Tibial artery (tissue), 4 donors: ENCODE measurements at regions of chr22 and their contacts with region 1.

Region 1: DNA sequence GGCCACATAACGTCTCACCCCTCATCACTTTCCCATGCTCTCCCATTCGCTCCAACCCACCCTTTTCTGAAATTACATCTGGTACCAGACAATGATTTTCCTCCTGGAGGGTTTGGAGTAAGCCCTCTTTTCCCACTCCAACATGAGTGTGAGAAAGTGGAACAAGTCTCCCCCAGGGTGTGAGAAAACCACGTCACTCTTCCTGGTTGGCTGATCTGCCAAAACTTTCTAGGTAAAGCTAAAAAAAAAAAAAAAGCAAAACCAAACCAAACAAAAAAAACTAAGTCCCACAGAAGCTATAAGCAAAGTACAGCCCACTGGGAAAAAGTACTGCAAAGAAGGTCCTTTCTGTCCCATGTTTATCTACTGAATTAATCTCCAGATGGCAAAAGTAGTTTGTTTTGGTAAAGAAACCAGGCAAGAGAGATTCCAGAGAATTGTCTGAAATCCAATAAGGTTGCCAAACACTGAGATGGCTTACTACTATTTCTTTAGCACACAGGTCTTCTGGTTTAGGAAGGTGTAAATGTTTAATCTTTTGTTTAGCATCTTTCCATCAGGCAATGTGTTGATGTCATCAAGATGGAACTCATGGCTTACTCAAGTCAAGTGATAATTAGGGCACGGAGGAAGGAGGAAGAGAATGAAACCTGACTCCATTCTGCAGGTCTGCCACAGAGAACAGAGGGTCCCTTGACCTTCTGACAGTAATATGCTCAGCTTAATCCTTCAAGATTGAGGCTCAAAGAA is 395.6 kb downstream of the LARGE1 start:
- DNase-seq: no peak
- H3K4me3 ChIP-seq: no peak overlapping the region
- H3K27ac ChIP-seq: no peak overlapping the region
- H3K4me1 ChIP-seq: no peaks in the 10 kb centered on the region
- H3K27me3 ChIP-seq: no peaks in the 10 kb centered on the region
- CTCF ChIP-seq: no peak

Region 2: GRCh38 chr22:33274214-33275072 is 250.2 kb before region 1 on chr22:
- intact Hi-C with region 1: no loop called
- DNase-seq: peak in 1 of 2 donors; percentile 32
- H3K4me3 ChIP-seq: no peak overlapping the region
- H3K27ac ChIP-seq: no peak overlapping the region
- H3K4me1 ChIP-seq: peaks cover 0 to 24% (median 9%) of the 10 kb centered on the region in 4 donors
- H3K27me3 ChIP-seq: no peaks in the 10 kb centered on the region
- CTCF ChIP-seq: no peak

Region 3: DNA sequence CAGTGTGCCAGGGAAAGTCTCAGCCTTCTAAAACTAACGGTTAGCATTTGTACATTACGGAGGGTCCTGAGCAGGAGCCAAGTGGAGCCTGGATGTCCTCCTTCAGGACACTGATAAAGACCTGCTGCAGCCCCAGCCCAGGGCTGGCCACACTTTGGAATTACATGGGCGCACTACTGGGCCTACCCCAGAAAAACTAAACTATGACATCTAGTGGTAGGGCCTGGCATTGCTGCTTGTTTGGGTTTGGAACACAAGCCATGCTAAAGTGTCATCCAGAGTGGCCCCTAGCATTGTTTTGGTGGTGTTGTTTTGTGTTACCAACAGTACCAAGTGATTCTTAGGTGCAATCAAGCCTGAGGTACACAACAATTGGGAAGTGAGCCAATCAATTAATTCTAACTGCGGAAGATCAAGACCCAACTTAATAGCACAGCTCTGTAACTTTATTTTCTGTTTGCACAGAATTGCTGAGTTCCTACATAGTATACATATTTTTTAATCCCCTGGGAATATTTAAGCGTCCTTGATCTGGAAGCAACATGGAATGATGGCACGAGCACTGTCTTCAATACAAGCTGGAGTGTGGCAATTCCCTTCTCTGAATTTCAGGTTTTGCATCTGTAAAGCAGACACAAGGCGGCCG is 54.9 kb after region 1 on chr22:
- intact Hi-C with region 1: loop called (anchors 5 kb)
- DNase-seq: peak in 1 of 2 donors; percentile 38
- H3K4me3 ChIP-seq: no peak overlapping the region
- H3K27ac ChIP-seq: no peak overlapping the region
- H3K4me1 ChIP-seq: no peaks in the 10 kb centered on the region
- H3K27me3 ChIP-seq: no peaks in the 10 kb centered on the region
- CTCF ChIP-seq: peak; percentile 64 to 84